Sciatic nerve (tissue), 2 donors: ENCODE measurements at regions of chr2 and their contacts with region 1.

Region 1: DNA sequence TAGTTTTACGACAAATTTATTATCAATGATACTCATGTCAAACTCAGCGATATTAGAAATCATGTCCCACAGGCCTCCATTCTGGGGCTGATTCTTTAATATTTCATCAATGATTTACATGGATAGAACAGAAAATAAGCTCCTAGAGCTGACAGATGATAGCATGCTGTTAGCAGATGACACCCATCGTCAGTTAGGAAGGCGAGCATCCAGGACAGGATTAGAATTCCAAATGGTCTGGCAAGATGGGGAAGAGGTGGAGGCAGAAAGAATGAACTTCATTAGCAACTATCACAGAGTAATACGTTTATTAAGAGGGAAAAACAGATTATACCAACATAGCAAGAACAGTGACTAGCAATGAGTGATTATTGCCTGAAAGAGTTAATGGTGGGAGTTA is 46.2 kb upstream of the ACVR1 start:
- DNase-seq: no peak
- ATAC-seq: no peak

Region 2: GRCh38 chr2:157946919-157947557 is 24.7 kb after region 1 on chr2:
- intact Hi-C with region 1: loop called (anchors 1 kb)
- DNase-seq: no peak
- ATAC-seq: no peak

Region 3: GRCh38 chr2:159249984-159250715 is 1327.8 kb after region 1 on chr2:
- intact Hi-C with region 1: loop called (anchors 5 kb)
- DNase-seq: no peak
- ATAC-seq: peak; percentile 92